Right ventricle myocardium superior (tissue), 1 donor: ENCODE measurements at regions of chr12 and their contacts with region 1.

Region 1: DNA sequence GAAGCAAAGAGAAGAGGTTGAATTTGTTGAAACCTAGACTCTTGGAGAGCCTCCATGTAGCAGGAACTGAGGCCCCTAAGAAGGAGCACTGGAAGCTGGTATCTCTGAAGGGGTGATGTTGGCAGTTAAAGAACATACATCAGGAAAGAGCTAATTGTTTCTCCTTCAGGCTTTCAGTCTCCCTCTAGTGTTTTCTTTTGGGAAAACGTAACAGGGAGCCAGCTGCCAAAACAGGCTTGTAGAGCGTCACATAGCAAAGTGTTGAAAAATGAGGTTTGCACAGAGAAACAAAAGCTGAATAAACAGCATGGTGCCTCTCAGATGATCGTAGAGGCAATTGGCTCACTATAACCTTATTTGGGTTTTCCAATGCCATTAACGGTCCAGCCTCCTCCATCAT is 46.9 kb upstream of the CAND1 start:
- DNase-seq: no peak
- ATAC-seq: no peak

Region 2: DNA sequence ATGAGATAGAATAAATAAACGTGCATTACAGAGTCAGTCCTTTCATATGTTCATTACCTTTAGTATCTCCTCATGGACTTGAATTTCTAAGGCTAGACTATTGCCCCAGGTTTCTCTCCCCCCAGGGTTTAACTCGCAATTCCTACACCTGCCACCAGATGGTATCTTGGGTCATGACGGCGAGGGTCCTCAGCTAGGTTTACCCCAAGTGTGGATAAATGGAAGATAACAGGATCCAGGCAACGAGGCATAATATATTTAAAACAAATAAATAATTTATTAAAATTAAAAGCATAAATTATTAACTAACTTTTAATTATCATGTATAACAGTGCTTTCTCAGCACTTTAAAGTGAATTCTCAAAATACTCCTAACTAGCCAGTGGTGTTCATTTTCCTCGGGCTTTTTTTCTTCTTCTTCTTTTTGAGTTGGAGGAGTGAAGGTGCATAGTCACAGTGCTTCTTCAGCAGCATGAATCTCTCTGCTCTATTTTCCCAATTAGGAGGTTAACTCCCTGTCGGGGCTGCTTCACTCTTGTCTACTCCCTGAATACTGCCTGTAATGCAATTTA is 196.7 kb before region 1 on chr12:
- intact Hi-C with region 1: loop called (anchors 10 kb)
- DNase-seq: no peak
- ATAC-seq: no peak

Region 3: DNA sequence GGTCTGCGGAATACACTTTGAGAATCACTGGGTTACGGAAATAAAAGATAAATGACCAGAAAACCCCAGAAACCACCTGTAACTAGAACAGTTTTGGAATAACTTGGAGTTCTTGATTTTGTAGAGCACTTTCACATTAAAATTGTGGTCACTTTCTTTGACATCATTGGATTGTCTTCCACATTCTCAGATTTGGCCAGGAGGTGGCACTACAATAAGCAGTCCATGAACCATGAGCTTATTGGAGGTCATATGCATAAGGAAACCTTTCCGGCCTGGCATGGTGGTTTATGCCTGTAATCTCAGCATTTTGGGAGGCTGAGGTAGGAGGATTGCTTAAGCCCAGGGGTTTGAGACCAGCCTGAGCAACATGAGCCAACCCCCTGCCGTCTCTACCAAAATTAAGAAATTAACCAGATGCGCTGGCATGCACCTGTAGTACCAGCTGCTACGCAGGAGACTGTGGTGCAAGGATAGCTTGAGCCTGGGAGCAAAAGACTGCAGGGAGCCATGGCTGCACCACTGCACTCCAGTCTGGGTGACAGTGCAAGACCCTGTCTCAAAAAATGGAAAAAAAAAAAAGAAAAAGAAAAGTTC is 60.9 kb before region 1 on chr12:
- intact Hi-C with region 1: loop called (anchors 5 kb)
- DNase-seq: no peak
- ATAC-seq: peak; percentile 64

Region 4: GRCh38 chr12:67193704-67194103 is 28.6 kb before region 1 on chr12:
- intact Hi-C with region 1: no loop called
- DNase-seq: no peak
- ATAC-seq: no peak